Pancreas (tissue), 10 donors: ENCODE measurements at regions of chr9 and their contacts with region 1.

Region 1: DNA sequence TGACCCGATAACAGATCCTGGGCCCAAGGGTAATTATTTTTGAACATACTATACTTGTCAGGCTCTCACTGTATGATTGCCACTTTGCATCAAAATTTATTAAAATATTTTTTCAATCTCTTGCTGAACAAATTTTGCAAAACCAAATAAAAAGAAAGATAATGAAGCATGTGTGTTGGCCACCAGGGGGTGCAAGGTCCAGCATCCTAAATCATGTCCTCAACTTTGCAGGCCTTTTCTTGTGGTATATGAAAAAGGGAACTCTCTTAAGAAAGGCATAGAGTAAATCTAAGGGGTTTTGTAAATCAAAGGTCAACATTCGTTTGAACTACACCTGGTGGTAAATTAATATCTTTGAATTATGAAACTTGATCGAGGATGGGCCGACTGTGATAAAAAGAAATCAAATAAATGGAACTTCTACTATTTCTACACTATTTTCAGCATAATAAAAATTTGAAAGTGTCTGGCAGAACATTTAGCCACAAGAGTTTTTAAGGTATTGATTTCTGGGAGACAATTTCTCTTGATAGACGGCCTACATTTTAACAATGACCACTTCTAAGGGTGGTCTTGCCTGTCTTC is 676.5 kb downstream of the DMRTA1 start:
- DNase-seq: no peak
- ATAC-seq: peak in 1 of 4 donors; percentile 46
- H3K4me3 ChIP-seq: no peak overlapping the region
- H3K27ac ChIP-seq: no peak overlapping the region
- H3K4me1 ChIP-seq: peaks cover 0 to 4% (median 0%) of the 10 kb centered on the region in 3 donors
- H3K27me3 ChIP-seq: no peaks in the 10 kb centered on the region
- CTCF ChIP-seq: peak; percentile 20 to 42 (median 34)

Region 2: GRCh38 chr9:23290973-23291372 is 167.8 kb after region 1 on chr9:
- intact Hi-C with region 1: no loop called
- DNase-seq: no peak
- ATAC-seq: no peak
- H3K4me3 ChIP-seq: no peak overlapping the region
- H3K27ac ChIP-seq: no peak overlapping the region
- H3K4me1 ChIP-seq: no peaks in the 10 kb centered on the region
- H3K27me3 ChIP-seq: no peaks in the 10 kb centered on the region
- CTCF ChIP-seq: no peak

Region 3: GRCh38 chr9:23492126-23493002 is 369.2 kb after region 1 on chr9:
- intact Hi-C with region 1: loop called in 1 of 3 experiments (anchors 10 kb)
- DNase-seq: no peak
- ATAC-seq: peak in 3 of 4 donors; percentile 71 to 78 (median 73)
- H3K4me3 ChIP-seq: no peak overlapping the region
- H3K27ac ChIP-seq: no peak overlapping the region
- H3K4me1 ChIP-seq: no peaks in the 10 kb centered on the region
- H3K27me3 ChIP-seq: no peaks in the 10 kb centered on the region
- CTCF ChIP-seq: peak in 3 of 4 donors; percentile 17 to 21 (median 17)